IMR-90 (cell line): ENCODE measurements at regions of chr7 and their contacts with region 1.

Region 1: GRCh38 chr7:26237035-26237807 is 35.7 kb downstream of the CBX3 start:
- DNase-seq: no peak
- ATAC-seq: no peak
- H3K4me3 ChIP-seq: no peak overlapping the region
- H3K27ac ChIP-seq: no peak overlapping the region
- H3K4me1 ChIP-seq: no peaks in the 10 kb centered on the region
- H3K27me3 ChIP-seq: no peaks in the 10 kb centered on the region
- CTCF ChIP-seq: no peak
- POLR2A ChIP-seq: no peak
- RAD21 ChIP-seq: no peak

Region 2: GRCh38 chr7:26167301-26167934 is 69.8 kb before region 1 on chr7:
- CTCF ChIA-PET with region 1: no interaction called
- POLR2A ChIA-PET with region 1: no interaction called
- dilution Hi-C with region 1: no loop called
- in situ Hi-C with region 1: no loop called
- intact Hi-C with region 1: no loop called
- DNase-seq: no peak
- ATAC-seq: no peak
- H3K4me3 ChIP-seq: no peak overlapping the region
- H3K27ac ChIP-seq: no peak overlapping the region
- H3K4me1 ChIP-seq: peaks cover 3% of the 10 kb centered on the region; the same call in 1 of the 2 replicates
- H3K27me3 ChIP-seq: no peaks in the 10 kb centered on the region
- CTCF ChIP-seq: no peak
- POLR2A ChIP-seq: no peak
- RAD21 ChIP-seq: no peak

Region 3: GRCh38 chr7:26216049-26216448 is 21.2 kb before region 1 on chr7:
- CTCF ChIA-PET with region 1: no interaction called
- POLR2A ChIA-PET with region 1: interaction called, 10 read pairs
- dilution Hi-C with region 1: no loop called
- in situ Hi-C with region 1: no loop called
- intact Hi-C with region 1: no loop called
- DNase-seq: no peak
- ATAC-seq: 0 out of 2 replicates have a peak, but pooled peaks have one; percentile 14
- H3K4me3 ChIP-seq: no peak overlapping the region
- H3K27ac ChIP-seq: no peak overlapping the region
- H3K4me1 ChIP-seq: no peaks in the 10 kb centered on the region
- H3K27me3 ChIP-seq: no peaks in the 10 kb centered on the region
- CTCF ChIP-seq: no peak
- POLR2A ChIP-seq: no peak
- RAD21 ChIP-seq: no peak

Region 4: DNA sequence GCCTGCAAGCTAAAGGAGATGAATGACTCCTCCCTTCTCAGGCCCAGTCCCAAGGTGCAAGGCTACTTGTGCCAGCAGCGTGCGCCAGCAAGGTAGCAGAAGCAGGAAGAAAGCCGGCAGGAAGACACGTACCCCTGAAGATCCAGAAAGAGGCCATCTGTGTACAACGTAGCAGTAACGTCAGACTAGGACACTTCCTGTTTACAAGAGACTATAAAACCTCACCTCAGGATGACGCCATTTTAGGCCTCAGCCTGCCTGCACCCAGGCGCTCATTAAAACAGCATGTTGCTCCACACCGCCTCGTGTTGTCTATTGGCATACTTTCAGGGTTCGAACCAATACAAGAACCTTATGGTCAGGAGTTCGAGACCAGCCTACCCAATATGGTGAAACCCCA is 13.0 kb after region 1 on chr7:
- CTCF ChIA-PET with region 1: no interaction called
- POLR2A ChIA-PET with region 1: interaction called, 11 read pairs
- dilution Hi-C with region 1: no loop called
- in situ Hi-C with region 1: no loop called
- intact Hi-C with region 1: no loop called
- DNase-seq: no peak
- ATAC-seq: no peak
- H3K4me3 ChIP-seq: no peak overlapping the region
- H3K27ac ChIP-seq: no peak overlapping the region
- H3K4me1 ChIP-seq: no peaks in the 10 kb centered on the region
- H3K27me3 ChIP-seq: no peaks in the 10 kb centered on the region
- CTCF ChIP-seq: no peak
- POLR2A ChIP-seq: no peak
- RAD21 ChIP-seq: no peak

Region 5: GRCh38 chr7:26311798-26312197 is 74.6 kb after region 1 on chr7:
- CTCF ChIA-PET with region 1: no interaction called
- POLR2A ChIA-PET with region 1: no interaction called
- dilution Hi-C with region 1: no loop called
- in situ Hi-C with region 1: no loop called
- intact Hi-C with region 1: loop called (anchors 2 kb)
- DNase-seq: no peak
- ATAC-seq: no peak
- H3K4me3 ChIP-seq: no peak overlapping the region
- H3K27ac ChIP-seq: no peak overlapping the region
- H3K4me1 ChIP-seq: no peaks in the 10 kb centered on the region
- H3K27me3 ChIP-seq: no peaks in the 10 kb centered on the region
- CTCF ChIP-seq: no peak
- POLR2A ChIP-seq: no peak
- RAD21 ChIP-seq: no peak